GM12878 (cell line): ENCODE measurements at regions of chr20 and their contacts with region 1.

Region 1: DNA sequence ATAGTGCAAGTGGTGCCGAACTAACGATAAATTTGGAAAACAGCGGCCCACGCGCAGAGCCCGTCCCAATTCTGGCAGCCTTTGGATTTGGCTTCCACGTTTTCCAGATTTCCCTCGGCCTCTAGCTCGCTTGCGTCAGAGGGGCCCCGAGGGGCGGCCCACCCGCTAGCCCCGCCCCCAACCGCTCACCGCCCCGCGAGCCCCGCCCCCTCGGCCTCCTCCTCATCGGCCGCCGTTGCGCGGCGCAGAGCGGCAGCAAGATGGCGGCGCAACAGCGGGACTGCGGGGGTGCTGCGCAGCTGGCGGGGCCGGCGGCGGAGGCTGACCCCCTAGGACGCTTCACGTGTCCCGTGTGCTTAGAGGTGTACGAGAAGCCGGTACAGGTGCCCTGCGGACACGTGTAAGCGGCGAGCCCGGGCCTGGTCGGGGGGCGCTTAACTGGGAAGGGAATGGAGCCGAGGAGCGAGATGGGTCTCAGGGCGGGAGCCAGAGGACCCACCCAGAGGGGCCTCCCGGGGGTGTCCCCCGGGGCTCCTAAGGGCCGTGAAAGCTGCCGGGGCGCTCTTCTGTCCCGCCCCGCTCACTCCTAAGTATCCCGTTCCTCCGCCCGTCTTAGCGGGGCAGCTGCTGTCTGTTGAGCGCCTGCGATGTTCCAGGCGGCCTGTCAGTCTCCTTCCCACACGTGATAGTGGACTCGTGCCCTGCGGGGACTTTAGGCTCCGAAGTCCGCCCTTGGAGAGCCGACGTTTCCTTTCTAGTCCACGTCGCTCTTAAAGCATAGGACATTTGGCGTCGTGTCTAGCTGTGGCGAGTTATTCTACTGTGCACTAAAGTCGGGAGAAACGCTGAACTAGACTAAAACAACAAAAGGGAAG is at the start of gene RNF114:
- DNase-seq: no peak
- ATAC-seq: peak; percentile 85
- H3K4me3 ChIP-seq: peak within 1 kb of the TSS; percentile 90
- H3K27ac ChIP-seq: peak within 1 kb of the TSS; percentile 85
- H3K4me1 ChIP-seq: peaks cover 17% of the 10 kb centered on the region
- H3K27me3 ChIP-seq: no peaks in the 10 kb centered on the region
- CTCF ChIP-seq: no peak; a peak in 1 of 6 replicates
- EP300 ChIP-seq: no peak; a peak in 1 of 4 replicates
- POLR2A ChIP-seq: peak; percentile 97
- RAD21 ChIP-seq: no peak
- polyA plus RNA-seq, gene RNF114: 28.0 to 33.2 TPM

Region 2: DNA sequence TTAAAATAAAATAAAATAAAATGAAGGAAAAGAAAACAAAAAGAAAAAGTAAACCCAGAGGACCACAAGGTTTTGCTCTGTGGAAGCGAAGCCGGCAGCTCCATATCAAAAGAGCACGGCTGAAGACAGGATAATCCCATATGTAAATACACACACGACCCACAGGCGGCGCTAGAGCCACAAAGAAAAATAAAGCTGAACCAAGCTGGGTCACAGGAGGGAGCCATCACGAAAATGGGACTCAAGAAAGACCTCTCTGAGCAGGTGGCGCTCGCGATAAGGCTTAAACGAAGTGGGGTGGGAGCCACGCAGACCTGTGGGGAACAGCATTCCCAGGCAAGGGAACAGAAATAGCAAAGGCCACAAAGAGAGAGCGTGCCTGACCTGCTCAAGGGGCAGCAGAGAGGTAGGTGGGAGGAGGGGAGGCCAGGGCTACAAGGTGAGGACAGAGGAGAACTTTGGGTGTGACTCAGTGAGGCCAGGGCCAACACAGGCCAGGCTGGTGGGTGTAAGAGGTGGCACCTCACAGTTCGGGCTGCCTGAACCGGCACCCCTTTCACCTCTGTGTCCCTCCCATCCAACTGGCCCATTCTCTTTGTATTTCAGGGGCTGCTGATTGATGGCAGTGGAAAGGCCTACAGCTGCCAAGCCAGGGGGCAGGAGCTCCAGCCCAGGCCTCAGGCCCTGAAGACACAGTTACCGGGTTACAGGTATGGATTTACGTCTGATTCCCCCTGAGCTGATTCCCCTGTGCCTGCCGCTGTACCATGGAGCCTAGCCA is 394.5 kb before region 1 on chr20:
- CTCF ChIA-PET with region 1: interaction called, 18 read pairs
- POLR2A ChIA-PET with region 1: no interaction called
- RAD21 ChIA-PET with region 1: interaction called, 7 read pairs
- SMC1A ChIA-PET with region 1: interaction called, 4 read pairs
- in situ Hi-C with region 1: no loop called
- intact Hi-C with region 1: no loop called
- DNase-seq: peak; percentile 35
- ATAC-seq: peak; percentile 91
- H3K4me3 ChIP-seq: no peak overlapping the region
- H3K27ac ChIP-seq: no peak overlapping the region
- H3K4me1 ChIP-seq: no peaks in the 10 kb centered on the region
- H3K27me3 ChIP-seq: no peaks in the 10 kb centered on the region
- CTCF ChIP-seq: peak; percentile 79 to 95 (median 95)
- EP300 ChIP-seq: no peak
- POLR2A ChIP-seq: no peak
- RAD21 ChIP-seq: peak; percentile 91

Region 3: GRCh38 chr20:49699200-49699992 is 237.0 kb before region 1 on chr20:
- CTCF ChIA-PET with region 1: no interaction called
- POLR2A ChIA-PET with region 1: interaction called, 10 read pairs
- RAD21 ChIA-PET with region 1: no interaction called
- SMC1A ChIA-PET with region 1: no interaction called
- in situ Hi-C with region 1: no loop called
- intact Hi-C with region 1: no loop called
- DNase-seq: no peak
- ATAC-seq: peak; percentile 90
- H3K4me3 ChIP-seq: peak overlapping the region; percentile 40
- H3K27ac ChIP-seq: peak overlapping the region; percentile 73
- H3K4me1 ChIP-seq: peaks cover 59% of the 10 kb centered on the region
- H3K27me3 ChIP-seq: no peaks in the 10 kb centered on the region
- CTCF ChIP-seq: no peak
- EP300 ChIP-seq: peak; percentile 53 to 75; a peak in 1 of 4 replicates
- POLR2A ChIP-seq: no peak
- RAD21 ChIP-seq: no peak

Region 4: GRCh38 chr20:49915378-49916145 is 20.8 kb before region 1 on chr20 and contains the start of gene SPATA2:
- CTCF ChIA-PET with region 1: interaction called, 10 read pairs
- POLR2A ChIA-PET with region 1: interaction called, 11 read pairs
- RAD21 ChIA-PET with region 1: interaction called, 12 read pairs
- SMC1A ChIA-PET with region 1: interaction called, 9 read pairs
- in situ Hi-C with region 1: no loop called
- intact Hi-C with region 1: loop called (anchors 1 kb)
- DNase-seq: peak; percentile 79
- ATAC-seq: peak; percentile 92
- H3K4me3 ChIP-seq: peak within 1 kb of the TSS; percentile 94
- H3K27ac ChIP-seq: peak within 1 kb of the TSS; percentile 100
- H3K4me1 ChIP-seq: peaks cover 8% of the 10 kb centered on the region
- H3K27me3 ChIP-seq: no peaks in the 10 kb centered on the region
- CTCF ChIP-seq: no peak
- EP300 ChIP-seq: no peak
- POLR2A ChIP-seq: peak; percentile 83
- RAD21 ChIP-seq: no peak
- polyA plus RNA-seq, gene SPATA2: 0.93 to 1.3 TPM

Region 5: GRCh38 chr20:49948809-49949548 is 12.6 kb after region 1 on chr20:
- CTCF ChIA-PET with region 1: interaction called, 3 read pairs
- POLR2A ChIA-PET with region 1: interaction called, 5 read pairs
- RAD21 ChIA-PET with region 1: no interaction called
- SMC1A ChIA-PET with region 1: interaction called, 13 read pairs
- in situ Hi-C with region 1: no loop called
- intact Hi-C with region 1: no loop called
- DNase-seq: no peak
- ATAC-seq: no peak
- H3K4me3 ChIP-seq: no peak overlapping the region
- H3K27ac ChIP-seq: no peak overlapping the region
- H3K4me1 ChIP-seq: no peaks in the 10 kb centered on the region
- H3K27me3 ChIP-seq: no peaks in the 10 kb centered on the region
- CTCF ChIP-seq: no peak
- EP300 ChIP-seq: no peak
- POLR2A ChIP-seq: no peak
- RAD21 ChIP-seq: no peak

Region 6: GRCh38 chr20:49964964-49965780 is 28.8 kb after region 1 on chr20:
- CTCF ChIA-PET with region 1: interaction called, 15 read pairs
- POLR2A ChIA-PET with region 1: no interaction called
- RAD21 ChIA-PET with region 1: no interaction called
- SMC1A ChIA-PET with region 1: no interaction called
- in situ Hi-C with region 1: no loop called
- intact Hi-C with region 1: no loop called
- DNase-seq: no peak
- ATAC-seq: peak; percentile 83
- H3K4me3 ChIP-seq: no peak overlapping the region
- H3K27ac ChIP-seq: no peak overlapping the region
- H3K4me1 ChIP-seq: no peaks in the 10 kb centered on the region
- H3K27me3 ChIP-seq: no peaks in the 10 kb centered on the region
- CTCF ChIP-seq: peak; percentile 46 to 72 (median 68)
- EP300 ChIP-seq: no peak
- POLR2A ChIP-seq: no peak
- RAD21 ChIP-seq: no peak; the same call in 1 of the 2 replicates